Cardiac septum (tissue), 1 donor: ENCODE measurements at regions of chr11 and their contacts with region 1.

Region 1: DNA sequence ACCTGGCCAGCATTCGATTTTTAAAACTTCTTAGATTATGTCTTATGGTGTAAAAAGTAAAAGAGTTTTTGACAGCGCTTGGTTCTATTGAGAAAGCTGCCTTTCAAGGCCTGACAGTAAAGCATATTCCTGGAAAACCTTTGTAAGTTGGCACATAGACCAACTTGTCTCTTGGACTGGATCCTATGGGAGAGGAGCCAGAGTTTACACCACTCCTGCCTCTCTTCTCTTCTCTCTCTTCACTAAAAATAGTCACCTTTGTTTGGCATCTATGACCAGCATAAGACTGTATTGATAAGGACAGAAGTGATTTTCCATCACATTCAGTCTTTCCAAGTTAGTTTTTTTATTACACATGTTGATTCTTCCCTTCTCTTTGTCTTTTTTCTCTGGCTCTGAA is 33.7 kb downstream of the CSRP3 start:
- DNase-seq: no peak

Region 2: GRCh38 chr11:19027829-19028595 is 140.1 kb before region 1 on chr11:
- intact Hi-C with region 1: no loop called
- DNase-seq: no peak

Region 3: DNA sequence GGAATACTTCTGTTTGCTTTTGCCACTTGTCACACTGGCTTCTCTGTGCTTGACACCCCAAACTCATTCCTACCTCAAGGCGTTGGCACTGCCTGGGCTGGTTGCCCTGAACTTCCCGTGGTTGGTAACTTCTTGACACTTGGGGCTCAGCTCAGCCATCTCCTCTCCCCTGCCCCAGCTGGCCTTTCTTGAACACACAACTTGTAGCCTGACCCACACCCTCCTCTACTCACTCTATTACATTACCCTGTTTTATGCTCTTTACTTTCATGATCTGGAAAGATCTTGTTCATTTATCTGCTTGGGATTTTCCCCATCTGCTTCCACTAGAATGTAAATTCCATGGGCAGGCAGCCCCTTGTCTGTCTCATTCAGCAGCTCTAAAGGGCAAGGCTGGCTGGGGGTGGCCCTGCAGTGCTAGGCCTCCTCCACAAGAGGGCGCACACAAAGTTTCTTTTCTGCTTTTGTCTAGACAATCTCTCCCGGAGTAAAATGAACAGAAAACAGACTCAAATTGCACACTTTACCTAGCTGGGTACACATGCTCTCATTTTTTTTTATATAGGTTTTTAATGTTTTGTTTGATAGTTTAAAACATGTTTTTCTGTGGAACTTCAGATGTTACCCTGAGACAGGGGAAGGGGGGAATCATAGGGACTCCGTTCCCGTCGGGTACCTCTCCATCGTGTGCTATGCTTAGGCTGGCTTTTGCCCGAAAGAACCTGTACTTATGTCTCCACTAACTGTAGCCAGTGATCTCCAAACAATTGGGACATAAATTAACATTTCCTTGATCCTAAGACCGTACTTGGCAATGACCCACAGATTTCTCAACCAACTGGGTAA is 91.1 kb before region 1 on chr11:
- intact Hi-C with region 1: loop called (anchors 5 kb)
- DNase-seq: no peak

Region 4: DNA sequence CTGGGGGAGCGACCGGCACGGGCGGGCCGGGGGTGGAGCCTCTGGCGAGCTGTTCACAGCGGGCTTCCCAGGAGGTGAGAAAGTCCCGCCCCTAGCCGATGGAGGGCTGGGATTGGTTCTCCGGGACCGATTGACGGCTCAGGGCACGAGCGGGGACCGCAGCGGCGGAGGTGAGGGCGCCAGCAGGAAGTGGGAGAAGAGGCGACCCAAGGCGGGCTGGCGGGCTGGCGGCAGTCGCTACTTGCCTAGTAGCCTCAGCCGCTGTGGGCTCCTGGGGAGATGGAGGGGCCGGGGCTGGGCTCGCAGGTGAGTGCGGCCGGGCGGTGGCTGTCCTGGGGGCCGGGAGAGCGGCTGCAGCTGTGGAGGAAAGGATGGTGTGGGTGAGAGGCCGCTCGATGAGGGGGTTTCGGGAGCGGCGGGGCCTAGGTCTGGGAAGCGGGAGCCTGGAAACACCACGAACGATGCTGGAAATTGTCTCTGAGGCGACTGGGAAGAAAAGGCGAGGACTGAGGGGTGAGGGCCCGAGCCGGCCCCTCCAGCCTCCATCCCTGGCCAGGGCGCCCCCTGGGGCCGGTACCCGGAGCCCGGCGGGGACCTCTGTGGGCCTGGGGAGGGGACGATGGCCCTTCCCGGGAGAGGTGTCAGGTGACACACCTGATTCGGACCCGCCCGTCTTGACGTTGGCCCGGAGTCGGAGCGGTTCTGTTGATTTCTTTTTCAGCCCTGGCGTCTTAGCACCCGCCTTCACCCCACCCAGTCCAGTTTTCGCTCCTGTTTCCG is 50.9 kb before region 1 on chr11 and contains the start of gene ZDHHC13:
- intact Hi-C with region 1: loop called (anchors 5 kb)
- DNase-seq: peak; percentile 99
- total RNA-seq, gene ZDHHC13: 7.8 TPM

Region 5: DNA sequence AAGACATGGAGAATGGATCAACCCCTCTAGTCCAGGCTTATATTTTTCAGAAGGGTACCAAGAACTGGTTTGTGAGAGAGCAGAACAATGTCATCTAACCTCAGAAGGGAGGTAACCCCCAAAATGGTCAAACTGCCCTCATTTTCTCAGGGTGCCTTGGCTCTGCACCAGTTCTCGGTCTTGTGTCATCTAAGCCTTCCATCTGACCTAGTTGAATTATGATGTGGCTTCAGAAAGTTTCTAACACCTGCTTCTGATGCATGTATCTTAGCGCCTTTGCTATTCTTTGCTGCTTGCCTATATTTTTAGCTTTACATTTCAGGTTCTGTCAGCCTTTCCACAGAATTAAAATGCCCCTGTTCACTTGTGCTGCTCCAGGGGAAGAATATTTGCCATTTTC is 164.4 kb after region 1 on chr11:
- intact Hi-C with region 1: no loop called
- DNase-seq: no peak